Breast epithelium (tissue), 4 donors: ENCODE measurements at regions of chr2 and their contacts with region 1.

Region 1: DNA sequence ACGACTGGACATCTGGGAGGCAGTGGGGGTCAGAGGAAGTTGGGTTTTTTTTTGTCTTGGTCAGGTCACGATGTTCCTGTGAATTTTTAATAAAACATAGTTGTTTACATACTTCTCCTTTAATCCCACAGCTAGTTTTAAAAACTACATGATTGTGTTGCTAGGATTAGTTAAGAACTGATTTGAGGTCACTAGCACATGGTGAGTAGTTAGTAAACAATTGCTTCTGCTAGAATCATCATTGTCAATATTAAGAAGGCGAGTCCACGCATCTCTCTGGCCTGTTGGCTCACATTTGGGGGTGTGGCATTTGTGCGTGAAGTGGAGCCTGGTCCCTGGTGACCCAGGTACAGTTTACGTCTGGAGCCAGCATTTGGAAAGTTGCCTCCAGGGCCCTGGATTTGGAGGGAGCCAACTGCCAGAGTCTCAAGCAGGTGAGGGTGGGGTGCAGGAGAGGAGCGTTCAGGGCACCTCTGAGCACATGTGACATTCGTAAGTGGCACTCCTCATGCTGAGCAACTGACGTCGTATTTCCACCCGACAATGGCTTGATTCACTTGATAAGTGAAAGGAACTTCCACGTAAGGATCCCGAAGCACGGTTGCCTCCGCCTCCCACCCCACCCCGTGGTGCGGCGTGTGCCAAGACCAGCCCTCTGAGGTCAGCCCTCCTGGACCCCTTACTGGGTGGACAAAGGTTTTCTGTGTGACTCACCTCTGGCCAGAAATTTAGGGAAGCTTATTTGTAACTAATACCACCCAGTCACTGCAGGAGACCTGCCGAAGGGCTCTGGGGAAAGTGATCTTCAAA is 59.7 kb downstream of the AGAP1 start:
- DNase-seq: no peak
- H3K4me3 ChIP-seq: no peak overlapping the region
- H3K27ac ChIP-seq: peak overlapping the region in 1 of 2 donors; percentile 19
- H3K4me1 ChIP-seq: peaks cover 5 to 10% of the 10 kb centered on the region in 2 donors
- H3K27me3 ChIP-seq: no peaks in the 10 kb centered on the region
- CTCF ChIP-seq: no peak
- POLR2A ChIP-seq: no peak

Region 2: GRCh38 chr2:234846599-234847363 is 706.7 kb before region 1 on chr2:
- intact Hi-C with region 1: no loop called
- DNase-seq: no peak
- H3K4me3 ChIP-seq: no peak overlapping the region
- H3K27ac ChIP-seq: no peak overlapping the region
- H3K4me1 ChIP-seq: no peaks in the 10 kb centered on the region
- H3K27me3 ChIP-seq: no peaks in the 10 kb centered on the region
- CTCF ChIP-seq: no peak
- POLR2A ChIP-seq: no peak

Region 3: GRCh38 chr2:235500761-235501672 is 52.5 kb before region 1 on chr2:
- intact Hi-C with region 1: loop called (anchors 2 kb)
- DNase-seq: no peak
- H3K4me3 ChIP-seq: no peak overlapping the region
- H3K27ac ChIP-seq: no peak overlapping the region
- H3K4me1 ChIP-seq: peaks cover 0 to 2% of the 10 kb centered on the region in 2 donors
- H3K27me3 ChIP-seq: no peaks in the 10 kb centered on the region
- CTCF ChIP-seq: no peak
- POLR2A ChIP-seq: no peak